ENCODE measurements at regions of chr9 and their contacts with region 1.

Region 1: DNA sequence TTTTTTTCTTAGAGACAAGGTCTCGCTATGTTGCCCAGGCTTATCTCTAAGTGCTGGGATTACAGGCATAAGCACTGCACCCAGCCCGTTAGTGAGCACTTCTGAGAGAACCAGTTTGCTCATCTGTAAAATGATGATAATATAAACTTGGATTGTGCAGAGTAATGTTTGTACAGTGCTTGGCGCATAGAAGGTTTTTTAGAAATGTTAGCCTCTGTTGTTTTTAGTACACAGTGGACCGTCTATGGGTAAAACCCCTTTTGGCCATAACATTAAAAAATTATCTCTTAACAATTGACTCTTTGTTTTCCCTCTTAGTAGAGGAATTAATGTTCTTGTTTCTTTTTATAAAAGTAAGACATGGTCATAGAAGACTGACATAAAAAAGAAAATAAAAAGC is 202.1 kb downstream of the PCSK5 start:
- DNase-seq: no peak
- ATAC-seq: no peak
- H3K4me3 ChIP-seq: no peak overlapping the region
- H3K27ac ChIP-seq: no peak overlapping the region
- H3K4me1 ChIP-seq: no peaks in the 10 kb centered on the region
- H3K27me3 ChIP-seq: no peaks in the 10 kb centered on the region; a peak in 1 of 5 replicates
- CTCF ChIP-seq: no peak
- EP300 ChIP-seq: no peak
- POLR2A ChIP-seq: no peak
- RAD21 ChIP-seq: no peak

Region 2: DNA sequence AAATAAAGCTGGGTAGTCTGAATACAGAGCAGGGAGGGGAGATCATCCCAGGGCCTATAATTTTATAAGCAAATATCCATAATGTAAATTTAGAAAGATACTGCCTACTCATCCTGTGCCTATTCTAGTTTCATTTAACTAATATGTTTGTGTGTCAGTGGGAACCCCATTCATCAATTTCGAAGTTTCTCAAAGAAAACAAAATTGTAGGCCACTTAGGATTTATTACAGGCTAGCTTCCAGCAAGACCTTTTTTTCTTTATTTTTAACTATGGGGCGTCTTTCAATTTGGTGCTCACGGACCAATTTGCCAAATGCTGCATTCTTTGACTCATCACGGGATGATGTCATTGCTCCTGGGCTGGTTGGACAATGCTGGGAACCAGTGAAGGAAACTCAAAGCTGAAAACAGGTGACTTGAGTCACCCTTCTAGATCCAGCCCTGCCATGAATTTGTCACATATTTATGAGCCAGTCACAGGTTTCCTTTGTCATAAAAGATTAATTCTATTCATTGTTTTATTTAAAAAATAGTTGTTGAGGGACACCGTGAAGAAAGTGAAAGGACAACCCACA is 188.7 kb before region 1 on chr9:
- CTCF ChIA-PET with region 1: no interaction called
- POLR2A ChIA-PET with region 1: no interaction called
- in situ Hi-C with region 1: no loop called
- intact Hi-C with region 1: no loop called
- DNase-seq: no peak
- ATAC-seq: no peak
- H3K4me3 ChIP-seq: no peak overlapping the region
- H3K27ac ChIP-seq: no peak overlapping the region
- H3K4me1 ChIP-seq: no peaks in the 10 kb centered on the region
- H3K27me3 ChIP-seq: no peaks in the 10 kb centered on the region
- CTCF ChIP-seq: no peak
- EP300 ChIP-seq: no peak
- POLR2A ChIP-seq: no peak
- RAD21 ChIP-seq: no peak

Region 3: DNA sequence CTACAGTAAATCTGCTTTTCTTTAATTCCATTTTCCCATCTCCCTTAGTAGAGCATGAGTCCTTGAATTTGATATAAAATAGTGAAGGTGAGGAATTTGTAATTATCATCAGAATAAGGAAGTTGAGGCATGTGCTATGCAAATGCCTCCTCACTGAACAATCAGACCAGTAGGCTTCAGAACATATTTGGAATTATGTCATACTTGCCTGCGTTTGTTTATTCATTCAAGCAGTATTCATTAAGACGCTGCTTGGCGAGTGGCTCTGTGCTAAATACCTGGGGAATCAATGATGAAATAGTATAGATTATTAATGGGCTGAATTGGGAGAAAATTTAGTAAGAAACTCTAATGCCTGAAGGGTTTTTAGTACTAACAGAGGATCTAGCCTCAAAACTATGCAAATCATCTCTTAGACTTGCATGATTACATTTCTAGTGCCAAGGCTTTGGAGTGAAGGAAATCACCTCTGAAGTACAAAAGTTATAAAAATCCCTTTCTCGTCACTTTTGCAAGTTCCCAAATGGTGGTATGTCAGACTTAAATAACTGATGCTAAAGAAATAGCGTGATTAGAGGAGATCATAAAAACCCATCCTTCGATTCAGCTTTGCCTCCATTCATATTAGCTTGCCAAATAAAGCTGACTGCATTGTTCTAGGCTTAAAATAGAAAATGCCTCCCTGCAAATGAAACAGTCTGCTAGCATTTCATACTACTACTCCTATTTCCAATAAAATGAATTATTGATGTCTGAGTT is 60.4 kb before region 1 on chr9:
- CTCF ChIA-PET with region 1: no interaction called
- POLR2A ChIA-PET with region 1: no interaction called
- in situ Hi-C with region 1: no loop called
- intact Hi-C with region 1: loop called (anchors 10 kb)
- DNase-seq: no peak
- ATAC-seq: no peak
- H3K4me3 ChIP-seq: no peak overlapping the region
- H3K27ac ChIP-seq: no peak overlapping the region
- H3K4me1 ChIP-seq: no peaks in the 10 kb centered on the region
- H3K27me3 ChIP-seq: no peaks in the 10 kb centered on the region
- CTCF ChIP-seq: no peak
- EP300 ChIP-seq: no peak
- POLR2A ChIP-seq: no peak
- RAD21 ChIP-seq: no peak